ENCODE measurements at regions of chr2 and their contacts with region 1.

Region 1: GRCh38 chr2:94874277-94875008 is 3.2 kb downstream of the TEKT4 start:
- DNase-seq: peak; percentile 32
- ATAC-seq: peak; percentile 91
- H3K4me3 ChIP-seq: no peak overlapping the region
- H3K27ac ChIP-seq: no peak overlapping the region
- H3K4me1 ChIP-seq: no peaks in the 10 kb centered on the region
- H3K27me3 ChIP-seq: no peaks in the 10 kb centered on the region
- CTCF ChIP-seq: peak; percentile 97

Region 2: DNA sequence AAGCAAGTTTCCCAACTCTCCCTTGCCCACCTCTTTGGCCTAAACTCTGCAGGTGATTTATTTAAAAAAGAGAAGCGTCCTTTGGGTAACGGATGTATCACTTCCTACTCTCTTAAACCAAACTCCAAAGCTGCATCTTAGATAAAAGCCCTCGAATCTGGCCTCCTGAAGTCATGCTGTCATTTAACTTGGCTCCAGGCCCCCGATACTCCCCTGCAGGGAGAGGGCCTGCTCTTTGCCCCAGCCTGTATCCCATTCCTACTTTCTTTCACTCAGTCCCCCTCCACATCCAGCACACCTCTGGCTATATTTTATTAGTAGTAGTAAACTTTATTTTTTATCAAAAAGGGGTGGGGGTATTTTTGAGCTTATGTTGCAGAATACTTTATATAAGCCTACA is 15.8 kb after region 1 on chr2:
- CTCF ChIA-PET with region 1: no interaction called
- POLR2A ChIA-PET with region 1: interaction called, 10 read pairs
- in situ Hi-C with region 1: no loop called
- intact Hi-C with region 1: no loop called
- DNase-seq: no peak
- ATAC-seq: no peak
- H3K4me3 ChIP-seq: no peak overlapping the region
- H3K27ac ChIP-seq: no peak overlapping the region
- H3K4me1 ChIP-seq: no peaks in the 10 kb centered on the region
- H3K27me3 ChIP-seq: peaks cover 5% of the 10 kb centered on the region; the same call in 1 of the 2 replicates
- CTCF ChIP-seq: no peak

Region 3: GRCh38 chr2:94956797-94957391 is 82.5 kb after region 1 on chr2:
- CTCF ChIA-PET with region 1: interaction called, 5 read pairs
- POLR2A ChIA-PET with region 1: no interaction called
- in situ Hi-C with region 1: no loop called
- intact Hi-C with region 1: loop called (anchors 5 kb)
- DNase-seq: peak; percentile 5
- ATAC-seq: peak; percentile 85
- H3K4me3 ChIP-seq: no peak overlapping the region
- H3K27ac ChIP-seq: no peak overlapping the region
- H3K4me1 ChIP-seq: no peaks in the 10 kb centered on the region
- H3K27me3 ChIP-seq: peaks cover 26% of the 10 kb centered on the region
- CTCF ChIP-seq: peak; percentile 94

Region 4: GRCh38 chr2:95159690-95160449 is 285.4 kb after region 1 on chr2 and contains the start of gene ZNF514:
- CTCF ChIA-PET with region 1: no interaction called
- POLR2A ChIA-PET with region 1: no interaction called
- in situ Hi-C with region 1: no loop called
- intact Hi-C with region 1: no loop called
- DNase-seq: no peak
- ATAC-seq: peak; percentile 96
- H3K4me3 ChIP-seq: peak within 1 kb of the TSS; percentile 74
- H3K27ac ChIP-seq: peak within 1 kb of the TSS; percentile 84
- H3K4me1 ChIP-seq: peaks cover 13% of the 10 kb centered on the region
- H3K27me3 ChIP-seq: no peaks in the 10 kb centered on the region
- CTCF ChIP-seq: no peak
- total RNA-seq, gene ZNF514: 20.5 TPM

Region 5: DNA sequence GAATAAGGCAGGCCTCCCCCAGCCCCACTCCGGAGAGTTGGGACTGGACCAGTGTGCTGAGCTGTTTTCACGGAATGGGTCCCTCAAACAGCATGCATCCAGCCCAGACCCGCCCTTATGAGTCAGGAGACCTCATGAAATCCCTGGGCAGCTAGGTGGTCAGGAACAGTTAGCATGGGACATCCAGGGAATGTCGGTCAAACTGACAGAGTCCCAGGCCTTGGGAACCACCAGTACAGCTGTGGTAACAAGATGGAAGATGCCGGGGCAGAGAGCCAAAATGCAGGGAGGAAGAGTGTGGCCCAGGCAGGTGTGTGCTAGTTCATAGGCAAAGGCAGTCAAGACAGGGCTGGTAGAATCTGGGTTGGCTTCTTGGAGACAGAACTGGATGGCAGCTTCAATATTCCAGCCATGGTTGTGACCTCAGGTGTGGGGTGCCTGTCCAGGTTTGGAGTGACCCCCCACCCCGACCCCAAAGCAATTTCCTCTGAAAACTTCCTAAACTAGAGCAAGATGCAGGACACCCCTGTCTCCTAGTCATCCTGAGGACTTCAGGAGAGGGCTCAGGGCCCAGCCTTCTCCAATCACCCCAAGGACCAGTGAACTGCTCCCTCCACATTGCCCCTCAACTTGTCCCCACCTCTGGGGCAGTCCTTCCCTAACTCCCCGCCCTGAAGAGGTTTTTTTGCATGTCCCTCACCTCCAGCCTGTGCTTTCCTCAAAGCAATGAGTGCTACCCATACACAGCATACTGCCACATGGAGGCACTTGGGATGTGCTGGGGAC is 469.2 kb after region 1 on chr2:
- CTCF ChIA-PET with region 1: no interaction called
- POLR2A ChIA-PET with region 1: no interaction called
- in situ Hi-C with region 1: no loop called
- intact Hi-C with region 1: no loop called
- DNase-seq: no peak
- ATAC-seq: no peak
- H3K4me3 ChIP-seq: no peak overlapping the region
- H3K27ac ChIP-seq: no peak overlapping the region
- H3K4me1 ChIP-seq: peaks cover 19% of the 10 kb centered on the region
- H3K27me3 ChIP-seq: no peaks in the 10 kb centered on the region
- CTCF ChIP-seq: no peak